Activated B cell treated with CpG ODN at 0.5 μM for 24 hours (primary cell): ENCODE measurements at regions of chr9 and their contacts with region 1.

Region 1: DNA sequence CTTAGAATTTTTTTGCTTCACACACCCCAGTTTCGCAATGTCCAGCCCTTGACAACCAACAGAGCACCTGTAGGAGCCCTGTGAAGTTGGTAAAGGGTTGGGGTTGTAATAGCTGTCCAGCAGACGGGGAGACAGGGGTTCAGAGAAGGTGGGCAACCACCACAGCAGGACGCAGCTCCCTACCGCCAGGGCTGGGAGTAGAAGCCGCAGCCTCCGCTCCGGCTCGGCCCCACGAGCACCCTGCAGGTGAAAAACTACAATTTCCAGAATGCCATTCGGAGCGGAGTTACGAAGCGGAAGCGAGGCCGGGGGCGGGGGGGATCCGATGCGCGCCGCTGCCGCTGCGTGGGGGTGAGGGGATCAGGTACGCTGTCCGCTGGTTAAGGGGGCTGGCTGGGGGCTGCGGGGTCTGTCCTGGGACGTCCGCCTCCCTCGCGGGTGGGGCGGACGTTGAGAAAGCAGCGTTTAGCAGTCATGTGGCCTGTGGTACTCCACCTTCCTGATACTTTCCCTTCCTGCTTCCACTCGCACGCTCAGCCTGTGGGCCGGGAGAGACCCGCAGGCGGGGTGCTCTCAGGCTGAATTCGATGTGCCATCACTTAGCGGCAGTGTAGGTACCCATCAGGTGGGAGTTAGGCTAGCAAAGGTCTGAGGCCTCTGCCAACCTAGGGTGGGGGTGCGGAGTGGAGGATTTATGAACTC is at the start of gene TRMT10B:
- DNase-seq: peak; percentile 62
- ATAC-seq: peak; percentile 92
- H3K4me3 Mint-ChIP-seq: peak within 1 kb of the TSS; percentile 96
- H3K27ac Mint-ChIP-seq: peak within 1 kb of the TSS; percentile 89
- H3K4me1 Mint-ChIP-seq: peaks cover 22% of the 10 kb centered on the region
- H3K27me3 Mint-ChIP-seq: no peaks in the 10 kb centered on the region
- CTCF ChIP-seq: no peak
- total RNA-seq, gene TRMT10B: 11.7 and 15.0 TPM in 2 replicates

Region 2: GRCh38 chr9:37784616-37785483 is 31.2 kb after region 1 on chr9 and contains the start of gene EXOSC3:
- CTCF ChIA-PET with region 1: no interaction called
- POLR2A ChIA-PET with region 1: interaction called, 4 read pairs
- intact Hi-C with region 1: loop called (anchors 1 kb)
- DNase-seq: peak; percentile 83
- ATAC-seq: peak; percentile 87
- H3K4me3 Mint-ChIP-seq: peak within 1 kb of the TSS; percentile 98
- H3K27ac Mint-ChIP-seq: peak within 1 kb of the TSS; percentile 93
- H3K4me1 Mint-ChIP-seq: peaks cover 35% of the 10 kb centered on the region
- H3K27me3 Mint-ChIP-seq: no peaks in the 10 kb centered on the region
- CTCF ChIP-seq: no peak
- total RNA-seq, gene EXOSC3: 63.8 and 69.9 TPM in 2 replicates

Region 3: GRCh38 chr9:37800631-37801286 is 47.1 kb after region 1 on chr9 and contains the start of gene DCAF10:
- CTCF ChIA-PET with region 1: no interaction called
- POLR2A ChIA-PET with region 1: interaction called, 3 read pairs
- intact Hi-C with region 1: loop called (anchors 1 kb)
- DNase-seq: peak; percentile 96
- ATAC-seq: peak; percentile 81
- H3K4me3 Mint-ChIP-seq: peak within 1 kb of the TSS; percentile 92
- H3K27ac Mint-ChIP-seq: peak within 1 kb of the TSS; percentile 89
- H3K4me1 Mint-ChIP-seq: peaks cover 40% of the 10 kb centered on the region
- H3K27me3 Mint-ChIP-seq: no peaks in the 10 kb centered on the region
- CTCF ChIP-seq: no peak
- total RNA-seq, gene DCAF10: 16.8 and 19.1 TPM in 2 replicates